ENCODE measurements at regions of chr4 and their contacts with region 1.

Region 1: DNA sequence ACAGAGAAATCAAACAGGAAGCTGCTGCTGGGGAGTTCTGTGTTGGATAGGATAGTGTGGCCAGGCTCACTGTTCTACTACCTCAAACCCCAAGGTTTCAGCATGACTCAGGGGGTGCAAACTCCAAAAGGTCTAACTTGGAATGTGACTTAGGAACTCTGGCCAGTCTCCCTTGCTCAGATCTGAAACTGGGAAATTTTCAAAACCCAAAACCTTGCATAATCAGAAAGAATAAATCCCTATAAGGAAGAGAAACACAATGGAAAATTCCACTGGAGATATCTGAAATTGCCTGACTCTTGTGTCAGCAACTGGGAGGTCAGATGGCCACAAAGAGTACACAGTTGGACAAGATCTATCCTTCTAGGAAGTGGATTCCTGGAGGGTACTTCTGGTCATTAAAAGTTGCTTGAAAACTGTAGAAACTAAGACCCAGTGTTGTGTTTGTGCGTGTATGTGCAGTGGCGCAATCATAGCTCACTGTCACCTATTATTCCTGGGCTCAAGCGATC is 58.0 kb downstream of the PPEF2 start:
- H3K4me3 ChIP-seq: no peak overlapping the region
- H3K27ac ChIP-seq: no peak overlapping the region
- H3K4me1 ChIP-seq: no peaks in the 10 kb centered on the region
- CTCF ChIP-seq: no peak

Region 2: GRCh38 chr4:75860571-75861334 is 16.5 kb after region 1 on chr4:
- CTCF ChIA-PET with region 1: interaction called, 10 read pairs
- POLR2A ChIA-PET with region 1: no interaction called
- H3K4me3 ChIP-seq: no peak overlapping the region
- H3K27ac ChIP-seq: no peak overlapping the region
- H3K4me1 ChIP-seq: no peaks in the 10 kb centered on the region
- CTCF ChIP-seq: no peak